CD4-positive, alpha-beta T cell (primary cell): ENCODE measurements at regions of chr2 and their contacts with region 1.

Region 1: GRCh38 chr2:3461801-3462492 is 57.4 kb downstream of the ADI1 start:
- DNase-seq: peak in 4 of 14 experiments; percentile 43 to 73 (median 66)
- ATAC-seq: peak; percentile 86
- H3K4me3 ChIP-seq: no peak overlapping the region
- H3K4me3 Mint-ChIP-seq: no peak overlapping the region
- H3K27ac ChIP-seq: no peak overlapping the region
- H3K27ac Mint-ChIP-seq: peak overlapping the region; percentile 56
- H3K4me1 ChIP-seq: peaks cover 9% of the 10 kb centered on the region
- H3K4me1 Mint-ChIP-seq: peaks cover 13% of the 10 kb centered on the region
- H3K27me3 ChIP-seq: no peaks in the 10 kb centered on the region
- H3K27me3 Mint-ChIP-seq: no peaks in the 10 kb centered on the region
- CTCF ChIP-seq: peak; percentile 90

Region 2: DNA sequence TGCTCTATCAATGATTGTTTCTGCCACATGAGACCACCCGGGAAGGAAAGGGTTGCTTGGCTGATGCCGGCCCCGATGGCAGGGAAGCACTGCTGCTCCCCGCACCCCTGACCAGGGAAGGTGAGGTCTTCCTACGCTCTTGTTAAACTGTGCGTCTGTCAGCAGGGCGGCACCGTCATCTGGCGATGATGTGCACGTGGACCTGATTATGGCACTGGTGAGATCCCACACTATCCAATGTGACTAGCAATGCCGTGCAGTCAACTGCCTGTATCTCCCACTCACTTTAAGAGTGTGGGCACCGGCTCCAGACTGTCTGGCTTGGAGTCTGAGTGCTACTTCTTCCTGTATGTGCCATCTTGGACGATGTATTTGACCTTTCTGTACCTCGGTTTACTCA is 1340.1 kb before region 1 on chr2:
- CTCF ChIA-PET with region 1: no interaction called
- POLR2A ChIA-PET with region 1: no interaction called
- intact Hi-C with region 1: loop called in 1 of 2 experiments (anchors 5 kb)
- DNase-seq: no peak
- ATAC-seq: no peak
- H3K4me3 ChIP-seq: no peak overlapping the region
- H3K4me3 Mint-ChIP-seq: no peak overlapping the region
- H3K27ac ChIP-seq: no peak overlapping the region
- H3K27ac Mint-ChIP-seq: no peak overlapping the region
- H3K4me1 ChIP-seq: peaks cover 4% of the 10 kb centered on the region
- H3K4me1 Mint-ChIP-seq: no peaks in the 10 kb centered on the region
- H3K27me3 ChIP-seq: peaks cover 0 to 3% of the 10 kb centered on the region in 2 experiments
- H3K27me3 Mint-ChIP-seq: peaks cover 12% of the 10 kb centered on the region
- CTCF ChIP-seq: no peak

Region 3: GRCh38 chr2:2810504-2810903 is 651.4 kb before region 1 on chr2:
- CTCF ChIA-PET with region 1: no interaction called
- POLR2A ChIA-PET with region 1: no interaction called
- intact Hi-C with region 1: no loop called
- DNase-seq: no peak
- ATAC-seq: no peak
- H3K4me3 ChIP-seq: no peak overlapping the region
- H3K4me3 Mint-ChIP-seq: no peak overlapping the region
- H3K27ac ChIP-seq: no peak overlapping the region
- H3K27ac Mint-ChIP-seq: no peak overlapping the region
- H3K4me1 ChIP-seq: no peaks in the 10 kb centered on the region
- H3K4me1 Mint-ChIP-seq: no peaks in the 10 kb centered on the region
- H3K27me3 ChIP-seq: no peaks in the 10 kb centered on the region
- H3K27me3 Mint-ChIP-seq: no peaks in the 10 kb centered on the region
- CTCF ChIP-seq: no peak

Region 4: DNA sequence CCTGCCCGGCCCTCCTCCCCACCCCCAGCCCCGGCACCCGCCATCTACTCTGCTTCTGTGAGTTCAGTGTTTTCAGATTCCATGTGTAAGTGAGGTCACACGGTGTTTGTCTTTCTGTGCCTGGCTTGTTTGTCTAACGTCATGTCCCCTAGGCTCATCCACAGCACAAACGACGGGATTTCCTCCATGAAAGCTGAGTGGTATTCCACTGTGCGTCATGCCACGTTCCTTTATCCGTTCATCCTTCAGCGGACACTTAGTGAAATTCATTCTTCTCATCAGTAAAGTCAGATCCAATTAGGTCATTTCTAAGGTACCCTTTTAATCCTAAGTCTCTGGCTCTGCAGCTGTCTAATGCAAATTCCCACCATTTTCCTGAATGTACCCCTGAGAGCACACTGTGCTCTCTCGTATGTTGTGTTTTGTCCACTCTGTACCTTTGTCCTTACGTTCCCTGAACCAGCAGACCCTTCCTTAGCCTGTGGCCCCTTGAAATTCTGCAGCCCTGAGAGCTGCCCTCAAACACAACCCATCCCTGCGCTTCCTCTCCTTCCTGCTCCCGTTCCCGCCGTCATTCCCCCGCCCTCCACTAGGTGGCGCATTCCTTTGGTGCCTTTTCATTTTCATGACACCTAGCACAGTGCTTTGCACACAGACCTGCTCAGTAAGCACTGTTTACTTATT is 38.3 kb before region 1 on chr2:
- CTCF ChIA-PET with region 1: interaction called, 4 read pairs
- POLR2A ChIA-PET with region 1: no interaction called
- intact Hi-C with region 1: loop called in 1 of 2 experiments (anchors 5 kb)
- DNase-seq: peak; percentile 54 to 81 (median 70)
- ATAC-seq: peak; percentile 60
- H3K4me3 ChIP-seq: no peak overlapping the region
- H3K4me3 Mint-ChIP-seq: no peak overlapping the region
- H3K27ac ChIP-seq: no peak overlapping the region
- H3K27ac Mint-ChIP-seq: no peak overlapping the region
- H3K4me1 ChIP-seq: no peaks in the 10 kb centered on the region
- H3K4me1 Mint-ChIP-seq: peaks cover 5% of the 10 kb centered on the region
- H3K27me3 ChIP-seq: no peaks in the 10 kb centered on the region
- H3K27me3 Mint-ChIP-seq: no peaks in the 10 kb centered on the region
- CTCF ChIP-seq: peak; percentile 99